Naive thymus-derived CD4-positive, alpha-beta T cell (primary cell): ENCODE measurements at regions of chr7 and their contacts with region 1.

Region 1: DNA sequence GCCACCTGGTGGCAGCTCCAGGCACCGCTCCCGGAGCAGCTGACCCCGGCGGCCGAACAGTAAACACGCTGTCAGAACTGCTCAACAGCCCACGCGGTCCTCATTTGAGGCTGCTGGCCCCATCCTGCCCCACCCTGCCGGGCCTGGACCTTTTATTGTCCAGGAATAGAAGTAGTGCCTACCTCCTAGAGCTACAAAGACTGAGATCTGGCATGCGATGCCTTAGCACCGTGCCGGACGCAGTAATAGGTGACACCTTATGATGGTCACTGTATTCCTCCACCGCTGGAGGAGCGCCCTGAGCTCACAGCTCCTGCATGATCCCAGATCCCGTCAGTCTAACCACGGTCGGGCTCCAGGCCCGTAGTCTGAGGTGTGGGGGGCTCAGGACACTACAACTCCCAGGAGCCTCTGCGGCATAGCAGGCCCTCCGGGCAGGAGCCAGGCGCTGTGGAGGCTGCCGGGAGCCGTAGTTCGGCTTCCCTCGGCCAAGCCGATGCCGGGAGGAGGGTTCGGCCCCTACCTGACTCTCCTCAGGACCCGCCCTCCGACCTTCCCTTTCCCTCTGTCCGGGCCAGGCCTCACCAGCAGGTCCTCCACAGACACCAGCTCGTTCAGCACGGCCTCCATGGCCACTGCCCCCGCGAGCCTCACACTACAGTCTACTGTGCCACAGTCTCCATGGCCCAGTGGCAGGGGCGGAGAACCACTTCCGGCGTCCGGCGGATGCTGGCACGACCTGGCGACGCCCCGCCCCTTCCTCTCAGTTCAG is at the start of gene FIS1:
- DNase-seq: peak; percentile 87 to 96 (median 94)
- ATAC-seq: peak; percentile 96
- H3K4me3 ChIP-seq: peak within 1 kb of the TSS; percentile 100
- H3K4me3 Mint-ChIP-seq: peak within 1 kb of the TSS; percentile 88 to 100 (median 98)
- H3K27ac ChIP-seq: peak within 1 kb of the TSS; percentile 93
- H3K27ac Mint-ChIP-seq: peak within 1 kb of the TSS; percentile 93 to 100 (median 97)
- H3K4me1 ChIP-seq: peaks cover 14 to 16% of the 10 kb centered on the region in 2 donors
- H3K4me1 Mint-ChIP-seq: peaks cover 16 to 45% (median 35%) of the 10 kb centered on the region in 7 donors
- H3K27me3 ChIP-seq: no peaks in the 10 kb centered on the region
- H3K27me3 Mint-ChIP-seq: no peaks in the 10 kb centered on the region
- total RNA-seq, gene FIS1: 79.8 to 121 (median 107) TPM

Region 2: DNA sequence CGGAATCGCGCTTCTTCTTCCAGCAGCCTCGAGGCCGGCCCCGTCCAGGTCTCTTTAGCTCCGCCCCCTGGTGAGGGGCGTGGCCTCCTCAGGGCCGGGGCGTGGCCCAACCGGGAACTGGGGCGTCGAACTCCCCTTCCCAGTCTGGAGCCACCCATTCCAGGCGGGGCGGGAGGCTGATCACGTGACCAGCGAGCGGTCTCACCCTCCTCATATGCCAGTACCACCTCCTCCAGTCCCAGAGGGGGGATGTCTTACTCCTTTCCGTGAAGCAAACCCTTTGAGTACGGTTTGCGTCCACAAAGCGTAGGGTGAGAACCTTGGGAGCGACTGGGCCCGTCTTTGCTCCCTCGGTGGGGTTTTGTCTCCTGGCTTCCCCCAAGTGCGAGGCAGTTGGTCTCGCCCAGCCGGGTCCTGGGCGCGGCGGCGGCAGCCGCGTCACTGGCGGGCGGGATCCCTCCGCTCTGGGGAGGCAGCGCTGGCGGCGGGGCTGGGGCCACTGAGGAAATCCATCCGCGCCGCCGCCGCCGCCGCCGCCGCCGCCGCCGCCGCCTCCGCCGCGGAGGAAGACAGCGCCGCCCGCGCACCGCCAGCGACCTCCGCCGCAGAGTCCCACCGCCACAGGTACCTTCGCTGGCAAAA is 571.1 kb before region 1 on chr7 and contains the start of gene GNB2:
- CTCF ChIA-PET with region 1: no interaction called
- POLR2A ChIA-PET with region 1: no interaction called
- intact Hi-C with region 1: loop called in 1 of 2 experiments (anchors 10 kb)
- DNase-seq: peak; percentile 92 to 100 (median 96)
- ATAC-seq: peak; percentile 75
- H3K4me3 ChIP-seq: peak within 1 kb of the TSS; percentile 82
- H3K4me3 Mint-ChIP-seq: peak within 1 kb of the TSS; percentile 89 to 99 (median 96)
- H3K27ac ChIP-seq: peak within 1 kb of the TSS; percentile 98
- H3K27ac Mint-ChIP-seq: peak within 1 kb of the TSS; percentile 88 to 97 (median 95)
- H3K4me1 ChIP-seq: no peaks in the 10 kb centered on the region
- H3K4me1 Mint-ChIP-seq: peaks cover 9 to 25% (median 15%) of the 10 kb centered on the region in 7 donors
- H3K27me3 ChIP-seq: no peaks in the 10 kb centered on the region
- H3K27me3 Mint-ChIP-seq: peaks cover 0 to 17% (median 0%) of the 10 kb centered on the region in 5 donors
- total RNA-seq, gene GNB2: 98.2 to 215 (median 132) TPM

Region 3: DNA sequence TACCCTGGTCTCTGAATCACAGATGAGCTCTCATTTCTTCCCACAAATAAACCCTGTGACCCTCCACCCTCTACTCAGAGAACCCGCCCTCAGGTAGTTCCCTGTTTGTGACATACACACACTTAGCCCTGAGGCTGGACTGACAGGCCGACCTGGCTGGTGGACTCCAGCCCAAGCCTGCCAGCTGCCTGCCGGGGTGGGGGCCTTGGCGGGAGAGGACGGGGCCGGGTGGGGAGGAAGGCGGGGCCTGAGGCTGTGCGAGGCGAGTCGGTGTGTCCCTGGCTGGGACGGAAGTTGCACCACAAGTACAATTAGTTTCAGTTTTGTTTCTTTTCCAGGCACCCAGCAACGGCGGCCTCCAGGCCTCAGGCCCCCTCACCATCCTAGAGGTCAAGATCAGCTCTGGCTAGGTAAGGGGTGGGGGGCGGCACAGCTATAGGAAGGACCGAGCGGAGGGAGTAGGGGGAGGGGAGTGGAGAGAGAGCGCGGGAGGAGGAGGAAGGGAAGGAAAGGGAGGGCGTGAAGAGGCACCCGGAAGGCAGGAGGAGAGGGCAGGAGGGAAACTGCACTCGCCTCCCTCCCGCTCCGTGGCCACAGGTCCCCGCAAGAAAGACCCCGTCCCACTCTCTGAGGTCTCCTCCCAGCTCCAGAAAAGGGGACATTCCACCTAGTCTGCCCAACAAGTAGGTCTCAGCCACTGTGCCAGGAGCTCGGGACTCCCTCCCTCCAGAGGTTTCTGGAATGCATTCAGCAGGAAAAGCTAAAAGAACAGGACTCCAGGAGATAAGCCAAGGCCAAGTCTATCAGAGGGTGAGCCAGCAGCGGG is 159.2 kb before region 1 on chr7 and contains the start of gene TRIM56:
- CTCF ChIA-PET with region 1: no interaction called
- POLR2A ChIA-PET with region 1: no interaction called
- intact Hi-C with region 1: loop called (anchors 1 kb)
- DNase-seq: peak; percentile 53 to 77 (median 74)
- ATAC-seq: peak; percentile 94
- H3K4me3 ChIP-seq: peak within 1 kb of the TSS; percentile 100
- H3K4me3 Mint-ChIP-seq: peak within 1 kb of the TSS; percentile 91 to 100 (median 98)
- H3K27ac ChIP-seq: peak within 1 kb of the TSS; percentile 97
- H3K27ac Mint-ChIP-seq: peak within 1 kb of the TSS; percentile 93 to 100 (median 99)
- H3K4me1 ChIP-seq: peaks cover 10 to 15% of the 10 kb centered on the region in 2 donors
- H3K4me1 Mint-ChIP-seq: peaks cover 14 to 43% (median 28%) of the 10 kb centered on the region in 7 donors
- H3K27me3 ChIP-seq: no peaks in the 10 kb centered on the region
- H3K27me3 Mint-ChIP-seq: peaks cover 0 to 6% (median 0%) of the 10 kb centered on the region in 5 donors
- total RNA-seq, gene TRIM56: 49.6 to 72.3 (median 68.0) TPM

Region 4: DNA sequence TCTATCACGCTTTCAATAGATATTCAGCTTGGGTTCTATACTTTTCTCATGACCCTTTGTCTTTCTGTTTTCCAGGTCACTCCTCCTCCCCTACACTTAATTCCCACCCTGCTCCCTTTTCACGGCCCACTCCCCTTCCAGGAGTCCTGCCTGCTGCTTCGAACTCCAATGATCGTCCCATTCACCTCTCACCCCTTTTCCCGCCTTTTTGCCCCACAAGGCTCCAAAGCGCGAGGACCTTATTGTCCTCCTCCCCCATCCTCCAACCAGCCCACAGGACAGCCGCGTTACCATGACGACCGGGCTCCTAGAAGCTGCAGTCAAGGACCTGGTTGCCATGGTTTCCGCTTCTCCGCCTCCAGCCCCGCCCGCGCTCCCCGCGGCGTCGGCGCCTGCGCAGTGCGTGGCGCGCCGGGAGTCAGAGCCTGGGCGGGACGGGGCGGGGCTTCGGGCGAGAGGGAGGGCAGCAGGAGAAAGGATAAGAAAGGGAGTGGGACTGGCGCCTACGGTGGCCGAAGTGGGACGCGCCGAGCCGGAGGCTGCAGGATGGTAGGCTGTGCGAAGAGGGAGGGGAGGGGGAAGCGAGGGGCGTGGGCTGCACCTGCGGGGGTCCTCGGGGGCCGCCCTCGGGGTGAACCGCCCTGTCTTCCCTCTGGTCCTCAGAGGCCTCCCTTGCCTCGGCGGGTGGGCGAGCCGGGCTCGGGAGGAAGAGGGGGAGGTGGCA is 90.4 kb before region 1 on chr7 and contains the start of gene AP1S1:
- CTCF ChIA-PET with region 1: no interaction called
- POLR2A ChIA-PET with region 1: no interaction called
- intact Hi-C with region 1: loop called (anchors 1 kb)
- DNase-seq: peak; percentile 82 to 94 (median 90)
- ATAC-seq: peak; percentile 95
- H3K4me3 ChIP-seq: peak within 1 kb of the TSS; percentile 62
- H3K4me3 Mint-ChIP-seq: peak within 1 kb of the TSS; percentile 70 to 91 (median 84)
- H3K27ac ChIP-seq: peak within 1 kb of the TSS; percentile 42
- H3K27ac Mint-ChIP-seq: peak within 1 kb of the TSS in 8 of 9 donors; percentile 29 to 95 (median 78)
- H3K4me1 ChIP-seq: peaks cover 10% of the 10 kb centered on the region in 2 donors
- H3K4me1 Mint-ChIP-seq: peaks cover 10 to 21% (median 13%) of the 10 kb centered on the region in 7 donors
- H3K27me3 ChIP-seq: no peaks in the 10 kb centered on the region
- H3K27me3 Mint-ChIP-seq: peaks cover 7 to 24% (median 8%) of the 10 kb centered on the region in 5 donors
- total RNA-seq, gene AP1S1: 6.2 to 39.4 (median 8.3) TPM

Region 5: GRCh38 chr7:101217388-101218235 is 26.9 kb before region 1 on chr7 and contains the starts of genes PLOD3 and ZNHIT1:
- CTCF ChIA-PET with region 1: interaction called, 30 read pairs
- POLR2A ChIA-PET with region 1: interaction called, 61 read pairs
- intact Hi-C with region 1: loop called (anchors 1 kb)
- DNase-seq: peak; percentile 86 to 97 (median 94)
- ATAC-seq: peak; percentile 85
- H3K4me3 ChIP-seq: peak within 1 kb of the TSS; percentile 70
- H3K4me3 Mint-ChIP-seq: peak within 1 kb of the TSS; percentile 89 to 97 (median 96)
- H3K27ac ChIP-seq: peak within 1 kb of the TSS; percentile 87
- H3K27ac Mint-ChIP-seq: peak within 1 kb of the TSS; percentile 88 to 96 (median 93)
- H3K4me1 ChIP-seq: peaks cover 15% of the 10 kb centered on the region in 2 donors
- H3K4me1 Mint-ChIP-seq: peaks cover 27 to 54% (median 46%) of the 10 kb centered on the region in 7 donors
- H3K27me3 ChIP-seq: no peaks in the 10 kb centered on the region
- H3K27me3 Mint-ChIP-seq: no peaks in the 10 kb centered on the region
- total RNA-seq, gene PLOD3: 18.5 to 88.4 (median 44.2) TPM
- total RNA-seq, gene ZNHIT1: 32.1 to 72.1 (median 37.6) TPM

Region 6: GRCh38 chr7:101321491-101322401 is 77.2 kb after region 1 on chr7 and contains the start of gene IFT22:
- CTCF ChIA-PET with region 1: no interaction called
- POLR2A ChIA-PET with region 1: no interaction called
- intact Hi-C with region 1: loop called in 1 of 2 experiments (anchors 1 kb)
- DNase-seq: peak; percentile 68 to 87 (median 79)
- ATAC-seq: peak; percentile 95
- H3K4me3 ChIP-seq: peak within 1 kb of the TSS; percentile 74
- H3K4me3 Mint-ChIP-seq: peak within 1 kb of the TSS; percentile 86 to 94 (median 91)
- H3K27ac ChIP-seq: peak within 1 kb of the TSS; percentile 70
- H3K27ac Mint-ChIP-seq: peak within 1 kb of the TSS; percentile 82 to 94 (median 90)
- H3K4me1 ChIP-seq: peaks cover 7 to 12% of the 10 kb centered on the region in 2 donors
- H3K4me1 Mint-ChIP-seq: peaks cover 0 to 19% (median 9%) of the 10 kb centered on the region in 7 donors
- H3K27me3 ChIP-seq: no peaks in the 10 kb centered on the region
- H3K27me3 Mint-ChIP-seq: peaks cover 0 to 7% (median 0%) of the 10 kb centered on the region in 5 donors
- total RNA-seq, gene IFT22: 3.7 to 7.4 (median 4.8) TPM